ENCODE measurements at regions of chrX and their contacts with region 1.

Region 1: DNA sequence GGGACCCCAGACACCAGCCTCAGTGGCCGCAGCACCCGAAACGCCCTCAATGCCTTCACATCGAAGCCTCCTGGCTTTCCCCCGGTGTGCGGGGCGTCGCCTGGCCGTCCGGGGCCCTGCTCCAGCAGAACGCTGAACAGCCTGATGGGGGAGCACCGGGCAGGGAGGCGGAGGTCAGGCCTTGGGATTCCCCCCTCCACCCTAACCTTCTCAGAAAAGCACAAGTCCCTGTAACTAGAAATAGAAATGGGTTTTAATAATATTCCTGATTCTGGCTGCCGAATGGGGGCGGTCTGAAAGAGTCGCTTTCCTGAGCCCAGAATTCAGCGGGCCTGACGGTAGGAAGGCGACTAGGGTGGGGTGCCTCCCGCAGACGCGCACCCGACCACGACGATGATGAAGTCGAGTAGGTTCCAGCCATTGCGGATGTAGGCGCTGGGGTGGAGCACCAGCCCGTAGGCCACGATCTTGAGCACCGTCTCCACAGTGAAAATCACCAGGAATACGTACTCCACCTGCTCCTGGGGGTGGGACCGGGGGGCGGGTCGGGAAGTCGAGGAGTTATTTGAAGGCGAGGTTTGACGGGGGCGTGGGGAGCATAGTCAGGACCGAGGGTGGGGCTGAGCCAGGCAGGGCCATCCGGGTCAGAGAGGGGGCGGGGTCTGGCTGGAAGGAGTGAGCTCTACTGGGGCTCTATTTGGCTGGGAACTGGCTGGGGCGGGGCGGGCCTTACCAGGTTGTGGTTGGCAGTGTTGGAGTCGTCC is 2.5 kb downstream of the CACNA1F start:
- DNase-seq: peak; percentile 81
- ATAC-seq: peak; percentile 77
- H3K4me3 Mint-ChIP-seq: peak overlapping the region; percentile 72
- H3K27ac Mint-ChIP-seq: peak overlapping the region; percentile 85
- H3K4me1 Mint-ChIP-seq: peaks cover 14% of the 10 kb centered on the region
- H3K27me3 Mint-ChIP-seq: no peaks in the 10 kb centered on the region

Region 2: DNA sequence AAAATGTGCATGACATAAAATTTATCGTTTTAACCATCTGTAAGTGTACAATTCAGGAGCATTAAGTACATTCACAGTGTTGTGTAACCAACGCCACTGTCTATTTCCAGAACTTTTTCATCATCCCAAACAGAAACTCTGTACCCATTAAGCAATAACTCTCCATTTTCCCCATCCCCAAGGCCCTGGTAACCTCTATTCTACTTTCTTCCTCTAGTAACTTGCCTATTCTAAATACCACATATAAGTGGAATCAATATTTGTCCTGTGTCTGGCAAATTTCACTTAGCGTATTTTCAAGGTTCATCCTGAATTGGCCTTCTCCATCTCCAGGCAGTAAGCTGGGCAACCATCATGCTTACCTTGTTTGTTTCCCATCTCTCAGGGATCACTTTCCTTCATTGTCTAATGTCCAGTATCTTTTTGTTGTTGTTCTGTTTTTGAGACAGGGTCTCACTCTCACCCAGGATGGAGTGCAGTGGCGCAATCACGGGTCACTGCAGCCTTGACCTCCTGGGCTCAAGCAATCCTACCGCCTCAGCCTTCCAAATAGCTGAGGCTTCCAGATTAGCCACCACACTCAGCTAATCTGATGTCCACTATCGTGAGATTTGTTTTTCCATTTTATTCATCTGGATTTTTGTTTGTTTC is 210.9 kb before region 1 on chrX:
- CTCF ChIA-PET with region 1: no interaction called
- POLR2A ChIA-PET with region 1: no interaction called
- intact Hi-C with region 1: no loop called
- DNase-seq: no peak
- ATAC-seq: no peak
- H3K4me3 Mint-ChIP-seq: no peak overlapping the region
- H3K27ac Mint-ChIP-seq: no peak overlapping the region
- H3K4me1 Mint-ChIP-seq: peaks cover 3% of the 10 kb centered on the region
- H3K27me3 Mint-ChIP-seq: no peaks in the 10 kb centered on the region

Region 3: GRCh38 chrX:49073601-49074571 is 156.8 kb before region 1 on chrX and contains the start of gene PRAF2:
- CTCF ChIA-PET with region 1: no interaction called
- POLR2A ChIA-PET with region 1: no interaction called
- intact Hi-C with region 1: loop called in 1 of 2 experiments (anchors 1 kb)
- DNase-seq: peak; percentile 94
- ATAC-seq: peak; percentile 98
- H3K4me3 Mint-ChIP-seq: peak within 1 kb of the TSS; percentile 78
- H3K27ac Mint-ChIP-seq: peak within 1 kb of the TSS; percentile 73
- H3K4me1 Mint-ChIP-seq: peaks cover 19% of the 10 kb centered on the region
- H3K27me3 Mint-ChIP-seq: no peaks in the 10 kb centered on the region
- total RNA-seq, gene PRAF2: 9.1 to 11.5 TPM

Region 4: GRCh38 chrX:49191033-49191871 is 39.4 kb before region 1 on chrX:
- CTCF ChIA-PET with region 1: interaction called, 3 read pairs
- POLR2A ChIA-PET with region 1: interaction called, 3 read pairs
- intact Hi-C with region 1: loop called (anchors 2 to 5 kb)
- DNase-seq: peak; percentile 89
- ATAC-seq: peak; percentile 91
- H3K4me3 Mint-ChIP-seq: peak overlapping the region; percentile 96
- H3K27ac Mint-ChIP-seq: peak overlapping the region; percentile 97
- H3K4me1 Mint-ChIP-seq: peaks cover 23% of the 10 kb centered on the region
- H3K27me3 Mint-ChIP-seq: no peaks in the 10 kb centered on the region

Region 5: GRCh38 chrX:49199906-49200771 is 30.5 kb before region 1 on chrX and contains the start of gene SYP:
- CTCF ChIA-PET with region 1: no interaction called
- POLR2A ChIA-PET with region 1: no interaction called
- intact Hi-C with region 1: loop called in 1 of 2 experiments (anchors 2 kb)
- DNase-seq: peak; percentile 94
- ATAC-seq: peak; percentile 95
- H3K4me3 Mint-ChIP-seq: peak within 1 kb of the TSS; percentile 60
- H3K27ac Mint-ChIP-seq: peak within 1 kb of the TSS; percentile 69
- H3K4me1 Mint-ChIP-seq: peaks cover 19% of the 10 kb centered on the region
- H3K27me3 Mint-ChIP-seq: no peaks in the 10 kb centered on the region
- total RNA-seq, gene SYP: 7.2 to 8.5 TPM